ENCODE measurements at regions of chr15 and their contacts with region 1.

Region 1: GRCh38 chr15:70815644-70816043 is 38.3 kb downstream of the LARP6 start:
- DNase-seq: no peak
- H3K4me3 ChIP-seq: no peak overlapping the region
- H3K27ac ChIP-seq: no peak overlapping the region
- H3K4me1 ChIP-seq: no peaks in the 10 kb centered on the region
- H3K27me3 ChIP-seq: no peaks in the 10 kb centered on the region

Region 2: DNA sequence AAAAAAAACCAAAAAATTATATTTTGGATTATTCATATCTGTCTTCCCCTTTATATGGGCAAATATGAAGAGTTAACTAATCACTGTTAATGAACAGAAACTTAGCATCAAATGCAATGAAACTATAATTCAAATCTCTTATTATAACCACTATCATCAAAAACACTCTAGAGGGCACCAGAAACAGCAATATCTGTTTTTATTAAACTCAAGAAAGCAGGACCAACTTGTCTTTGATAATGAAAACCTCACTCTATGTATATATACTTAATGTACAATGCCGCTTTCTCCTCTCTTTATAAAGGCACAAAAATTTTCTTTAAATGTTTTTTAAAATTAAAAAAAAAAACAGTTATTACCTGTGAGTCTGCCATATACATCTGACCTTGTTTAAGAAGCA is 145.0 kb before region 1 on chr15:
- in situ Hi-C with region 1: loop called (anchors 10 kb)
- DNase-seq: peak; percentile 22
- H3K4me3 ChIP-seq: no peak overlapping the region
- H3K27ac ChIP-seq: no peak overlapping the region
- H3K4me1 ChIP-seq: peaks cover 5% of the 10 kb centered on the region; the same call in 1 of the 2 replicates
- H3K27me3 ChIP-seq: no peaks in the 10 kb centered on the region

Region 3: GRCh38 chr15:70752193-70752635 is 63.4 kb before region 1 on chr15:
- in situ Hi-C with region 1: no loop called
- DNase-seq: no peak
- H3K4me3 ChIP-seq: no peak overlapping the region
- H3K27ac ChIP-seq: no peak overlapping the region
- H3K4me1 ChIP-seq: peaks cover 27% of the 10 kb centered on the region
- H3K27me3 ChIP-seq: no peaks in the 10 kb centered on the region

Region 4: DNA sequence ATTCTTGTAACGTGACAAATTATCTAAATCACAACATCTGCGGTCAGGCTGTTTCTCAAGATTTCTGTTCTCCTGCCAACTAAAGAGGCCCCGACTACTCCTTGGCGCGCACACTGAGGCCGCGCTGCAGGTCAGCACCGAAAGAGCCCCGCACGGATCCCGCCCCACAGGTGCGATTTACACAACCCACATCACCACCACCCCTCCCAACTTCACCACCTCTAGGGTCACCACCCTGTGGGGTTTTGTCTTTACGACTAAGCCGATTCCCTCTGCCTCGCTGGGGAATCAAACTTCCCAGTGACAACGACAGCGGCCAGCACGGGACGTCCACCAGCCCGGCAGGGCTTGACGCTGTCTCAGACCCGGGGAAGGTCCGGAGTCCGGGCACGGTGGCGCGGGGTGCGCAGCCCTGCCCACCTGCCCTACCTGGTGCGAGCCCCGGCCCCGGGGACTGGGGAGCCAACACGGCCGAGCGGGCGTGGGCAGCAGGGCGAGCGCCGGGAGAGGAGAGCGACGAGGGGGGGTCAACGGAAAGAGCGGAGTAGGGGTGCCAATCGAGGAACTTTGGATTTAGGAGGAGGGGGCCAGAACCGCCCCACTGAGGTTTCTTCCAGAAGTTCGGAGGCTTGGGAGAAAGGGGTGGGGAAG is 53.0 kb before region 1 on chr15:
- in situ Hi-C with region 1: no loop called
- DNase-seq: peak; percentile 87
- H3K4me3 ChIP-seq: peak overlapping the region; percentile 90
- H3K27ac ChIP-seq: peak overlapping the region; percentile 56
- H3K4me1 ChIP-seq: peaks cover 64% of the 10 kb centered on the region
- H3K27me3 ChIP-seq: no peaks in the 10 kb centered on the region

Region 5: DNA sequence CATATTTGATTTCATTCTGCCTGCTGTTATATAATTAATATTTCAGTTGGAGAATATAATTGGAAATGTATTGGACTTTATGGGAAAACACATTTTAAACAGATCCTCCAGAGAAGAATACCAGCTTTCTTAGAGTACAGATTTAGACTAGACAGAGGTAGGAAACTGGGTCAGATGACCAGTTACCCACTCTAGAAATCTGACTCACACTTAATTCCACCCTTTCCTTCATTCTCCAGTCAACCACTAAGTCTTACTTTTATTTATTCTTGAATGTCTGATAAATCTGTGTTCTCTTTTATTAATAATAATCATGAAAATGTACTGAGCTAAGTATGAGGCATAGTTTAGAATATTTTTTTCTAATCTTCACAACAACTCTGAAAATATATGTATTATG is 187.7 kb after region 1 on chr15:
- in situ Hi-C with region 1: no loop called
- DNase-seq: peak; percentile 49
- H3K4me3 ChIP-seq: no peak overlapping the region
- H3K27ac ChIP-seq: peak overlapping the region; percentile 21
- H3K4me1 ChIP-seq: peaks cover 20% of the 10 kb centered on the region
- H3K27me3 ChIP-seq: no peaks in the 10 kb centered on the region

Measured in GM23248 (cell line).